ENCODE measurements at regions of chr4 and their contacts with region 1.

Region 1: GRCh38 chr4:48906206-48907173 is at the start of gene OCIAD2:
- DNase-seq: peak; percentile 80
- H3K4me3 Mint-ChIP-seq: peak within 1 kb of the TSS; percentile 96
- H3K27ac Mint-ChIP-seq: peak within 1 kb of the TSS; percentile 97
- H3K4me1 Mint-ChIP-seq: peaks cover 36% of the 10 kb centered on the region
- H3K27me3 Mint-ChIP-seq: no peaks in the 10 kb centered on the region
- CTCF ChIP-seq: no peak
- total RNA-seq, gene OCIAD2: 141 and 182 TPM in 2 replicates

Region 2: DNA sequence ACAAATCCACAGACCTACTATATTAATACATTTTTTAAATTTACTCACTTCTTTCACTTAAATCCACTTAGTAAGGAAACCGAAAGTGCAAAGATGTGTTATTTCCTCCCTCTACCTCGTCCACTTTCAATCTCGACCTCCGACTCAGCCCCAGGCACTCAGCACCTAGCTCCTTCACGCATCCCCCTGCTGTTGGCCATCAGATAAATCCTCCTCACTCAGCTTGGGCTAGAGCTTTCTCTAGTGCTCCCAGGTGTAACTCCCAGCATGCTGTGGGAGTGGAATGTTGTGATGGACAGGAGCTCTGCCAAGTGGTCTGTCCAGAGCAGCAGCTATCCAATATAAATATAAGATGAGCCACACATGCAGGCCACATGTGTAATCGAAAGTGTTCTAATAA is 610.1 kb before region 1 on chr4:
- CTCF ChIA-PET with region 1: no interaction called
- intact Hi-C with region 1: no loop called
- DNase-seq: no peak
- H3K4me3 Mint-ChIP-seq: no peak overlapping the region
- H3K27ac Mint-ChIP-seq: no peak overlapping the region
- H3K4me1 Mint-ChIP-seq: no peaks in the 10 kb centered on the region
- H3K27me3 Mint-ChIP-seq: no peaks in the 10 kb centered on the region
- CTCF ChIP-seq: no peak

Region 3: GRCh38 chr4:48698029-48698971 is 208.2 kb before region 1 on chr4:
- CTCF ChIA-PET with region 1: no interaction called
- intact Hi-C with region 1: loop called (anchors 10 kb)
- DNase-seq: peak; percentile 75
- H3K4me3 Mint-ChIP-seq: peak overlapping the region; percentile 19
- H3K27ac Mint-ChIP-seq: peak overlapping the region; percentile 86
- H3K4me1 Mint-ChIP-seq: peaks cover 35% of the 10 kb centered on the region
- H3K27me3 Mint-ChIP-seq: no peaks in the 10 kb centered on the region
- CTCF ChIP-seq: no peak

Region 4: GRCh38 chr4:48801734-48802133 is 104.8 kb before region 1 on chr4:
- CTCF ChIA-PET with region 1: no interaction called
- intact Hi-C with region 1: no loop called
- DNase-seq: no peak
- H3K4me3 Mint-ChIP-seq: no peak overlapping the region
- H3K27ac Mint-ChIP-seq: no peak overlapping the region
- H3K4me1 Mint-ChIP-seq: peaks cover 9% of the 10 kb centered on the region
- H3K27me3 Mint-ChIP-seq: no peaks in the 10 kb centered on the region
- CTCF ChIP-seq: no peak

Region 5: GRCh38 chr4:48944756-48945241 is 38.3 kb after region 1 on chr4:
- CTCF ChIA-PET with region 1: interaction called, 8 read pairs
- intact Hi-C with region 1: loop called (anchors 5 kb)
- DNase-seq: peak; percentile 48
- H3K4me3 Mint-ChIP-seq: peak overlapping the region; percentile 59
- H3K27ac Mint-ChIP-seq: peak overlapping the region; percentile 98
- H3K4me1 Mint-ChIP-seq: peaks cover 39% of the 10 kb centered on the region
- H3K27me3 Mint-ChIP-seq: no peaks in the 10 kb centered on the region
- CTCF ChIP-seq: peak; percentile 39

Measured in Calu3 (cell line).